Ascending aorta (tissue), 2 donors: ENCODE measurements at regions of chr6 and their contacts with region 1.

Region 1: GRCh38 chr6:72748759-72749158 is 126.9 kb downstream of the KCNQ5 start:
- DNase-seq: no peak
- H3K4me3 ChIP-seq: no peak overlapping the region
- H3K27ac ChIP-seq: no peak overlapping the region
- H3K4me1 ChIP-seq: peaks cover 5 to 11% of the 10 kb centered on the region in 2 donors
- H3K27me3 ChIP-seq: no peaks in the 10 kb centered on the region
- CTCF ChIP-seq: no peak

Region 2: GRCh38 chr6:72654071-72654621 is 94.6 kb before region 1 on chr6:
- intact Hi-C with region 1: loop called (anchors 5 kb)
- DNase-seq: no peak
- H3K4me3 ChIP-seq: no peak overlapping the region
- H3K27ac ChIP-seq: no peak overlapping the region
- H3K4me1 ChIP-seq: peaks cover 0 to 5% of the 10 kb centered on the region in 2 donors
- H3K27me3 ChIP-seq: no peaks in the 10 kb centered on the region
- CTCF ChIP-seq: no peak

Region 3: GRCh38 chr6:72811971-72812421 is 63.2 kb after region 1 on chr6:
- intact Hi-C with region 1: loop called (anchors 5 kb)
- DNase-seq: no peak
- H3K4me3 ChIP-seq: no peak overlapping the region
- H3K27ac ChIP-seq: no peak overlapping the region
- H3K4me1 ChIP-seq: peaks cover 0 to 17% of the 10 kb centered on the region in 2 donors
- H3K27me3 ChIP-seq: no peaks in the 10 kb centered on the region
- CTCF ChIP-seq: no peak

Region 4: DNA sequence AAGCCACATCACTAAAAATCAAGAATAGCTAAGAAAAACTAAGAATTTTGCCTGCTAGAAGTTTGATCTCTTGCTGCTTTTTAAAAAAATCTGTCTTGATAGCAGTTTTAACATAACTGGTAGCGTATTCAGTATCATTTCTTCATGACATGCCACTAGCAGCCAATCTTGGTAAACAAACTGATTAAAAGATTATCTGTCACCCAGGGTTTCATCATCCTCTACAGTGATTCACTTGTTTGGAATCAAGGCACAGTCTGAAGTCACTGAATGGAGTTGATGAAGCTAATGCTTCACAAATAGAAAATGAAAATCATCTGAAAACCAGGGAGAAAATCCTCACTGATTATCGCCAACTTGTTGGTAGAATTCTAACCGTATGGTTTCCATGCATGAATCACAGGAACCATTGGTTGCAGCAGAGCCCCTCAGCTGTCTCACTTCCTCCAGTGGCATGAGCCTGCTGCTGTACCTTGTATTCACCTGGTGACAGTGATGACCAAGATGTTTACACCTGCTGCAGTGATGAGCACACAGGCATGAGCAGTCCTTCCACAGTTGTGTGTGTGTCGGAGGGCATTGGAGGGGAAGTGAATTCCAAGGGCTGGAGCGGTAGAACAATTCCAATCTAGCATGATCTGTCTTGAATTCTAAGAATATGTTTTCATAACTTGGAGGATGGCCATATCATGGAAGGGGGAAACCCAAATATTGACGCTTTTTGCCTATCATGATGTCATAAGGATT is 201.5 kb after region 1 on chr6:
- intact Hi-C with region 1: loop called (anchors 5 kb)
- DNase-seq: no peak
- H3K4me3 ChIP-seq: no peak overlapping the region
- H3K27ac ChIP-seq: peak overlapping the region; percentile 52 to 62
- H3K4me1 ChIP-seq: peaks cover 0 to 36% of the 10 kb centered on the region in 2 donors
- H3K27me3 ChIP-seq: no peaks in the 10 kb centered on the region
- CTCF ChIP-seq: no peak